ENCODE measurements at regions of chr9 and their contacts with region 1.

Region 1: DNA sequence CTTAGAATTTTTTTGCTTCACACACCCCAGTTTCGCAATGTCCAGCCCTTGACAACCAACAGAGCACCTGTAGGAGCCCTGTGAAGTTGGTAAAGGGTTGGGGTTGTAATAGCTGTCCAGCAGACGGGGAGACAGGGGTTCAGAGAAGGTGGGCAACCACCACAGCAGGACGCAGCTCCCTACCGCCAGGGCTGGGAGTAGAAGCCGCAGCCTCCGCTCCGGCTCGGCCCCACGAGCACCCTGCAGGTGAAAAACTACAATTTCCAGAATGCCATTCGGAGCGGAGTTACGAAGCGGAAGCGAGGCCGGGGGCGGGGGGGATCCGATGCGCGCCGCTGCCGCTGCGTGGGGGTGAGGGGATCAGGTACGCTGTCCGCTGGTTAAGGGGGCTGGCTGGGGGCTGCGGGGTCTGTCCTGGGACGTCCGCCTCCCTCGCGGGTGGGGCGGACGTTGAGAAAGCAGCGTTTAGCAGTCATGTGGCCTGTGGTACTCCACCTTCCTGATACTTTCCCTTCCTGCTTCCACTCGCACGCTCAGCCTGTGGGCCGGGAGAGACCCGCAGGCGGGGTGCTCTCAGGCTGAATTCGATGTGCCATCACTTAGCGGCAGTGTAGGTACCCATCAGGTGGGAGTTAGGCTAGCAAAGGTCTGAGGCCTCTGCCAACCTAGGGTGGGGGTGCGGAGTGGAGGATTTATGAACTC is at the start of gene TRMT10B:
- DNase-seq: peak; percentile 67
- H3K4me3 ChIP-seq: peak within 1 kb of the TSS; percentile 89
- H3K27ac ChIP-seq: peak within 1 kb of the TSS; percentile 42
- H3K4me1 ChIP-seq: peaks cover 4% of the 10 kb centered on the region
- H3K27me3 ChIP-seq: no peaks in the 10 kb centered on the region
- CTCF ChIP-seq: no peak
- total RNA-seq, gene TRMT10B: 8.3 to 11.9 TPM

Region 2: DNA sequence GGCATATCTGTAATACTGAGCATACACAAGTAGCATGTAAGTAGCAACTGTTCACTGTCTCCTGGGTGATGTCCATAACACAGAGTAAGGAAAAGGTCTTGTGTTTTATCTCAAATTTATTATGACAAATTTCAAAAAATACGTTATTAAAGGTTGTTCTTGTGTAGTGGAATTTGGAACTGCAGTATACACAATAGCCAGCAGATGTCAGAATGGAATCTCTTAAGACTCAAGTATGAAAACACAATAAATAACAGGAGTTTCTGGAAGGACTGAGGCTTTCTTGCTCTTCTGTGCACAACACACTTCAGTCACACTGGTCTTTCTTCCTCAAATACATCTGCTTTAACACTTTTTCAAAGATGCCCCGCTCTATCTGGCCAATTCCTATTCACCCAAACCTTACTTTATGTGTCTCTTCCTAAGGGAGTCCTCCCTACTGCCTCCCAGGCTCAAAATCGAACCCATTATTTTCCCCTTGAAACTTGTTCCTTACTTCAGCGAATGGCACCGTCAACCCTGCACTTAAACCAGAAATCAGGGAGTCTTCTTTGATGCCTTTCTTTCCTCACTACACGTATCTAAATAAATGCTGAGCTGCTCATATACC is 171.0 kb before region 1 on chr9:
- intact Hi-C with region 1: loop called (anchors 10 kb)
- DNase-seq: no peak
- H3K4me3 ChIP-seq: no peak overlapping the region
- H3K27ac ChIP-seq: no peak overlapping the region
- H3K4me1 ChIP-seq: no peaks in the 10 kb centered on the region
- H3K27me3 ChIP-seq: no peaks in the 10 kb centered on the region
- CTCF ChIP-seq: peak; percentile 61

Region 3: GRCh38 chr9:37663926-37664325 is 89.7 kb before region 1 on chr9:
- intact Hi-C with region 1: no loop called
- DNase-seq: no peak
- H3K4me3 ChIP-seq: no peak overlapping the region
- H3K27ac ChIP-seq: no peak overlapping the region
- H3K4me1 ChIP-seq: no peaks in the 10 kb centered on the region
- H3K27me3 ChIP-seq: no peaks in the 10 kb centered on the region
- CTCF ChIP-seq: no peak

Region 4: DNA sequence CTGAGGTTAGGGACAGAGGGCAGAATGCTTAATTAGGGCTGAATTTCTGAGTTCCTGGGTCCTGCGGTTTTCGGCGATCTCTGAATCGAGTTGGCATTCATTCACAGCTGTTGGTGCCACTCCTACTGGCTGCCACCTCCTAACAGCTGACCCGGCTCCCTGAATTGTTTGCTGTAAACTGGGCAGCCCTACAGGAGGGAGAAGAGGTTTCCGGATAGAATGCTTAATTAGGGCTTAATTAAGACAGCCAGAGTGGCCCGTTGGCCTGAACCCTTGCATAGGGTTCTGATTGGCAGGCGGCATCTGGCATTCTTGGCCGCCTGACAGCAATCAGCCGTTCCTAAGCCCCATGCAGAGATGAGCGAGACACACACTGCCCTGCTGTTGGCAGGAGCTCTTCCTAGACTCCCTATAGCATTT is 77.2 kb before region 1 on chr9:
- intact Hi-C with region 1: no loop called
- DNase-seq: no peak
- H3K4me3 ChIP-seq: no peak overlapping the region
- H3K27ac ChIP-seq: no peak overlapping the region
- H3K4me1 ChIP-seq: no peaks in the 10 kb centered on the region
- H3K27me3 ChIP-seq: no peaks in the 10 kb centered on the region
- CTCF ChIP-seq: no peak

Region 5: DNA sequence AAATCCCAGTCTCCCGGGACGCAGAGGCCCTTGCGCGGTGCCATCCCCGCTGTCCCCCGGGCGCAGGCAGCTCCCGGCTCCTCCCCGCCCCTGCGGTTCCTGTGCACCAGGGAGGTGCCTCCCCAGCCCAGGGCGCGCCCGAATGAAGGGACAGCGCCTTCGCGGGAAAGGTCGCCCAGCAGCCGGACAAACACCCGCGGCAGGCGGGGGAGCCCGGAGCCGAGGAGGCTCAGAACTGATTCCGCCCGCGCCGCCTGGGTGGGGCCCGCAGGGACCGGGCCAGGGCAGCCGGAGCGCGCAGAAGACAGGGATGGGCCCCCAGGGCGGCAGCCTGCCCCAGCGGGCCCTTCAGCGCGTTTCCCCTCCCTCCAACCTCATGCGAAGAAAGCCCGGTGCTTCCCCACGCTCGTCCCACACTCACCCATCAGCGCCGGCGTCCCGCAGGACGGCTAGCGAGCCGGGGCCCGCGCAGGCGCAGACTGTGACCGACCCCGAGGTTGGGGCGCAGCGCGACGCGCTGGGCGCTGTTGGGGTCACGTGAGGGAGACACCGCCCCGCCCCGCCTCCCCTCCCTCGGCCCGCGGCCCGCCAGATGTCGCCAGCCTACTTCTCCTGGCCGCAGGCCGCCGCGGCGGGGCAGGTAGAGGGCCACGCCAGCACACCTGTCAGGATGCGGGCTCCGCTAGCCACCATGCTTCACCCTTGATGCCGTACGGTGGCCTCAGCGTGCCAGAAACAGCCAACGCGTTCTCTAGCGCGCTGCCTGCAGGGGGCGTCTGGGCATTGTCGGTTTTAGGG is 150.2 kb after region 1 on chr9 and contains the start of gene SLC25A51:
- intact Hi-C with region 1: loop called (anchors 10 kb)
- DNase-seq: peak; percentile 97
- H3K4me3 ChIP-seq: peak within 1 kb of the TSS; percentile 94
- H3K27ac ChIP-seq: peak within 1 kb of the TSS; percentile 95
- H3K4me1 ChIP-seq: peaks cover 6% of the 10 kb centered on the region
- H3K27me3 ChIP-seq: no peaks in the 10 kb centered on the region
- CTCF ChIP-seq: peak; percentile 90
- total RNA-seq, gene SLC25A51: 19.4 to 22.7 TPM

Region 6: DNA sequence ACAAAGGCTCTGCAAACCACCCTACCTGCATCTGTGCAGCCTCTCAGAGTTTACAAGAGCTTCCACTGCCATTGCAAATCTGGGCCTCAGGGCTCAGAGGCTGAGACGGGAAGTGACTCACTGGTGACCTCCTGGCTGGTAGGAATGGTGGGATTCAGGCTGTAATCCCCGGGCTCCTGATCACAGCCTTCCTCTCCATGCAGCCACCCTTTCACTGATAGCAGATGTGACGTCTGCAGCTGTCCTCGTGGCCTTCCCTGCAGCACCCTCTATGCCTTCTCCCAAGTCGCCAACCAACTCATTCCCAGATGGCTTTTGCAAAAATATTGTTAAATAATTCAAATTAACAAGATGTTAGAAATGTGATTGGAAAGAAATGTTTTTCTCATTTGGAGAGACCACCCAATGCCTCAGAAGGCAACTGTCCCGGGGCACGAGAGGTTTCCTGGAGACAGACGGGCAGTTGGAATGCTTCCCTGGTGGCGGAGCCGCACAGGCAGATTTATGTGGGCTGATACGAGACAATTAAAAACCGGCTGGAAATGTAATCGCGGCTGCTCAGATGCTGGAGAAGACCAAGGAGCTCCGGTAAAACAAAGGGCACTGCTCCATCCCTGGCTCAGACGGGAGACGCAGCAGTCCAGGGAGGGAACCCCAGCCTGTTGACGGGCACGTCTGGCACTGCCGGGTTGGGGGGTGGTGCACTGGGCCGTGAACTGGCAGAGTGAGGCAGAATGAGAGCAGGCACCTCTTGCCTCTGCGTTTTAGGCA is 184.7 kb after region 1 on chr9:
- intact Hi-C with region 1: no loop called
- DNase-seq: no peak
- H3K4me3 ChIP-seq: no peak overlapping the region
- H3K27ac ChIP-seq: no peak overlapping the region
- H3K4me1 ChIP-seq: no peaks in the 10 kb centered on the region
- H3K27me3 ChIP-seq: no peaks in the 10 kb centered on the region
- CTCF ChIP-seq: no peak

Region 7: DNA sequence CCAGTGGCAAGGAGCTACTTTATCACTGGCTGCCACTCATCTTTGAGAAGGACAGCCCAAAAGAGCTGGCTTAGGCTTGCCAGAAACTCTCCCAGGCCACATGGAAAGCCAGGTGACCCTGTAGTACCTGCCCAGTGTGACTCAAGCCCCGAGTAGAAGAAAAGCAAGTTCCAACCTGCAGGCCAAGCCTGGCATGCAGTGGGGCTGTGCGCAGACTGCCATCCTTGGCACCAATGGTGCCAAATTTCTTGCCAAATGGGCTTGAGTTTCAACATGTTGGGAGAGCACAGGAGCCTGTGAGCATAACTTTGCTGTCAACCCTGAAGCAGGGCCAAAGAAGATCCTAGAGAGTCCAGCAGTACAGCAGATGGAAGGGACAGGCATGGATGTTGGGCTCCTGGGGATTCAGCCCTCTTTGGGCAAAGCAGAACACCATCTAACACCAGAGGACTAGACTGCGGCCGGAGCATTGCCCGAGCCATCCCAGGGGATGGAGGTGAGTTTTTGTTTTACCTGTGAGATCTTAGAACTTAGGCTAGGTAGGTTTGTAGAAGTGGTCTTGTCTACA is 342.7 kb after region 1 on chr9:
- intact Hi-C with region 1: no loop called
- DNase-seq: no peak
- H3K4me3 ChIP-seq: no peak overlapping the region
- H3K27ac ChIP-seq: no peak overlapping the region
- H3K4me1 ChIP-seq: no peaks in the 10 kb centered on the region
- H3K27me3 ChIP-seq: no peaks in the 10 kb centered on the region
- CTCF ChIP-seq: no peak